ENCODE measurements at regions of chr17 and their contacts with region 1.

Region 1: DNA sequence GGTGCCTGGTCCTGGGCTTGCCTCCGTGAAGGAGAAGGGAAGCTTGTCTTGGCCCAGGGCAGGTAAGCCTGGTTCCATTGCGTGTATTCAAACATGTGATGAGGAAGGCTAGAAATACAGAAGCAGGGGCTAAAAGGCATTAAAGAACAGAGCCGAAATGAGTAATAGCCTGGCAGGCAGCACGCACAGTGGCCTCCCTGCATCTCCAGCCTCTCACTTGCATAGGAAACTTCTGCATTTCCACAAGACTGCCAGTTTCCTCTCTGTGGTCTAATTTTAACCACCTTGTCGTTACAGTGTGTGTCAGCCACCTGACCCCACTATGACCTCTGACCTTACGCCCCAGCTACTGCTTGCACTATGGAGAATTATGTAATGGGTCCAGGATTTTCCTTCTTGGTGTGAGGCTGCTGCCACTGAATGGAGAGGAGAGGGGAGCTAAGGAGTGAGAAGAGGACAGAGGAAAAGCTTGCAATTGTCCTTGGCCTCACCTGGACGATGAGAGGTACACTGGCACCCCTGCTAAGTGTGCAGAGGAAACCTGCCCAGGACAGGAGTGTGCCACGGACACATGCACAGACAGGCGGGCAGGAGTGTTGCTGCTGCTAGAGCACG is 32.8 kb downstream of the HIC1 start:
- DNase-seq: peak; percentile 88
- H3K4me3 Mint-ChIP-seq: peak overlapping the region; percentile 75
- H3K27ac Mint-ChIP-seq: peak overlapping the region; percentile 84
- H3K4me1 Mint-ChIP-seq: peaks cover 87% of the 10 kb centered on the region
- H3K27me3 Mint-ChIP-seq: no peaks in the 10 kb centered on the region

Region 2: DNA sequence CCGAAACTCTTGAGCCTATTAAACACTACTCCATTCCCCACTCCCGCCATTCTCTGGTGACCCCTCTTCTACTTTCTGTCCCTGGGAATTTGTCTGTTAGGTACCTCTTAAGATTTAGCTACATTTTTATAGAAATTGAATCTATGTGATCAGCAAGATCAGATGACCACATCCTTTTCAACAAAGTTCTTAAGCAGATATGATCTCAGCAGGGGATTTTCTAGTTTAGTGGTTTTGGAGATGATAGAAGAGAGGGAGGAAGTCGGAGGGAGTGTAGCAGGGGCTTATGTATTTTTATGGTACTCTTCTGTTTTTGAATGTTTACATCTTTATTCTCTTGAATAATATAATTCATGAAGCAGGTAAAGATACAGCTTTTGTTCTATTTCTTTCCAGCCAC is 217.1 kb before region 1 on chr17:
- intact Hi-C with region 1: loop called (anchors 5 kb)
- DNase-seq: peak; percentile 84
- H3K4me3 Mint-ChIP-seq: peak overlapping the region; percentile 72
- H3K27ac Mint-ChIP-seq: peak overlapping the region; percentile 92
- H3K4me1 Mint-ChIP-seq: peaks cover 71% of the 10 kb centered on the region
- H3K27me3 Mint-ChIP-seq: no peaks in the 10 kb centered on the region

Region 3: GRCh38 chr17:2070241-2071023 is 17.3 kb before region 1 on chr17:
- intact Hi-C with region 1: loop called (anchors 1 kb)
- DNase-seq: peak; percentile 89
- H3K4me3 Mint-ChIP-seq: peak overlapping the region; percentile 74
- H3K27ac Mint-ChIP-seq: peak overlapping the region; percentile 97
- H3K4me1 Mint-ChIP-seq: peaks cover 58% of the 10 kb centered on the region
- H3K27me3 Mint-ChIP-seq: no peaks in the 10 kb centered on the region

Region 4: DNA sequence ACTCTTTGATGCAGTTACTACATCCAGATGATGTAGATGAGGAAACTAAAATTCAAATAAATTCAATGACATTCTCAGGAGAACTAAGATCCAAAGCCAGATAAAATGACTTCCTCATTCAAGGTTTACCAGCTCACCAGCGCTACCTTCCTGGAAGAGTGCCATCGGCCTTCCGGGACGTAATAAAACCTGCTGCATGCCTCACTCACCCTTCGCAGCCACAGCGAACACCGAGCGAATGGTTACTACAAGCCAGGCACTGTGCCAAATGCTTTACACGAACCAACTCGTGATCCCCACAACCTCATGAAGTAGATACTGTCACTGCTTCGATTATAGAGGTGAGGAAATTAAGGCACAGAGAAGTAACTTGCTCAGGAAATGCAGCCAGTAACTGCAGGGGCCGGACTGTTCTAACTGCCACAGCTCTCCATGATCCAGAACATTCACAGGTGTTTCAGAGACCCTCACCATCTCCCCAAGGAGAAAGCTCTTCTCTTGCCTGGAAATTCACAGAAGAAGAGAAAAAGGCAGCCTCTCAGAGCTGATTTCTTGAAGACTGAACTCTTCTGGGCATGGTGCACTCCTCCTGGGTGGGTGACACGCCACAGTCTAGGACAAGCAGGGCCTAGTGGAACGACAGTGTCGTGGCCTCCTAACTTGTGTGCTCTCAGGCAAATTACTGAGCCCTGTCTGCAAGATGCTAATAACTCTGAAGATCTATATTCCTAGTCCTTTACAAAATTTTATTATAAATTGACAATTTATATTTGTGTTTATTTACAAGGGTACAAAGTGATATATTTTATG is 13.9 kb after region 1 on chr17:
- intact Hi-C with region 1: loop called (anchors 2 kb)
- DNase-seq: peak; percentile 77
- H3K4me3 Mint-ChIP-seq: peak overlapping the region; percentile 7
- H3K27ac Mint-ChIP-seq: peak overlapping the region; percentile 59
- H3K4me1 Mint-ChIP-seq: peaks cover 46% of the 10 kb centered on the region
- H3K27me3 Mint-ChIP-seq: no peaks in the 10 kb centered on the region

Region 5: DNA sequence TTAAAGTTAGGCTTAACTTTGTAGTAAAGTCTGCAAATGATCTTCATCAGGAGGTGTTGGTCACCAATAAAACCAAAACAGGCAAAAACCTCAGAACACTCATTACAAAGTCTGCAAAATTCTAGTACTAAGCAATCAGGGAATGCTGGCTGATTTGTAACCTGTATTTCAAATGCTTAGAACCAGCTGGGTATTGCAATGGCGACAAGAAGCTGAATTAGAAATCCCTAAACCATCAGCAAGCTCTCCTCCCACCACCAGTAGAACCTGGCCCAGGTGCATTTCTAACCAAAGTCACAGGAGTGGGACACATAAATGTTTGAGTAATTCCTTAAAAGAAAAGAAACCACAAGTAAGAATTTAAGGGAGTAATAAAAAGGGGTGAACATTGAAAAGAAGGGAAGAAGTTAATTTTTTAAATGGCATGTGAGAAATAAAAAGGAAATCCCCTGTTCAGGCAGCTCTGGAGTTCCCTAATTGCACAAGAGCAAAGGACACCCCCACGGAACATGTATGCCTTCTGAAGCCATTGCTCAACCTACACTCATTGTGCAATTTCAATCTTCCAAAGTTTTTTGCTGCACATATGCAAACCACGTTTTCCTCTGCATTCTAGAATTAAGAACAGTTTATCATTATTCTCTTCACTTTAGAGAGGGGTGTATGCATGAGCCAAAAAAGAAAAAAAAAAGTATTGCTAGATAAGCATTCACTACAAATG is 70.1 kb after region 1 on chr17:
- intact Hi-C with region 1: loop called (anchors 5 kb)
- DNase-seq: no peak
- H3K4me3 Mint-ChIP-seq: peak overlapping the region; percentile 21
- H3K27ac Mint-ChIP-seq: peak overlapping the region; percentile 60
- H3K4me1 Mint-ChIP-seq: peaks cover 33% of the 10 kb centered on the region
- H3K27me3 Mint-ChIP-seq: no peaks in the 10 kb centered on the region

Region 6: DNA sequence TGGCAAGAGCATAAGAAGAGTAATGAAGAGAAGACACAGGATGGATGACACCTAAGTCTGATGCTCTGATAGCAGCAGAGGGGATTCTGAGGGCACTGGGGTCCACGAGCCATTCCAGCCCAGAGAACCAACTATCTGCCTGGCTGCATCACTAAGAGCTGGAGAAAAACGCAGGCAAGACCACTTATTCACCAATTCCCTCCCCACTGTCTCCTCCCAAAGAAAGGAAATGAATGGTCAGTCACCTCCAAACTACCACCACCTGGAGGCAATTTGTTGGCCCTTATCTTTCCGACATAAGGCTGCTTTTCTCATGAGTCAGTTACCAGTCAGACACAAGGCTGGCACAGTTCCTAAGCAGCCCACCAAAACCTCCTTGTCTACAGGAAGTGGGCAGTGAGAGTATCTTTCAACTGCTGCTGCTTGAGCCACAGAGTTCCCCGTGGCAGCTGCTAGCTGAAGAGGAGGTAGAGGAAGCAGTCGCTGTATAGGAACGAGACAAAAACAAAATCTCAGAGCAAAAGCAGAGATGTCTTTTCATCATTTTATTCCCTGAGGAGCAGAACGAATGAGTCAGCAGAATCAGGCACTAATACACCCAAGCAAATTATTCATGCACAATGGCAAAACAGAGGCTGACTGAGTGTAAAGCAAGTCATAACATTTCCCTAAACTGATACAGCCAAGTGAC is 104.8 kb after region 1 on chr17:
- intact Hi-C with region 1: loop called (anchors 2 kb)
- DNase-seq: peak; percentile 81
- H3K4me3 Mint-ChIP-seq: peak overlapping the region; percentile 57
- H3K27ac Mint-ChIP-seq: peak overlapping the region; percentile 77
- H3K4me1 Mint-ChIP-seq: peaks cover 64% of the 10 kb centered on the region
- H3K27me3 Mint-ChIP-seq: no peaks in the 10 kb centered on the region

Region 7: GRCh38 chr17:2215616-2216364 is 128.1 kb after region 1 on chr17:
- intact Hi-C with region 1: loop called (anchors 5 kb)
- DNase-seq: peak; percentile 92
- H3K4me3 Mint-ChIP-seq: peak overlapping the region; percentile 84
- H3K27ac Mint-ChIP-seq: peak overlapping the region; percentile 96
- H3K4me1 Mint-ChIP-seq: peaks cover 51% of the 10 kb centered on the region
- H3K27me3 Mint-ChIP-seq: no peaks in the 10 kb centered on the region

Measured in activated CD4-positive, alpha-beta T cell treated with anti-CD3 and anti-CD28 coated beads, Interleukin-2, amount 10 ng/mL, durations not matched to agents 24 days and 14 days (primary cell).